AG04450 (cell line): ENCODE measurements at regions of chr2 and their contacts with region 1.

Region 1: GRCh38 chr2:191051825-191052778 is 38.1 kb upstream of the STAT1 start:
- DNase-seq: no peak
- H3K4me3 ChIP-seq: no peak overlapping the region
- H3K27ac ChIP-seq: no peak overlapping the region
- H3K27me3 ChIP-seq: no peaks in the 10 kb centered on the region
- CTCF ChIP-seq: peak; percentile 69

Region 2: GRCh38 chr2:191020221-191020741 is 31.8 kb before region 1 on chr2:
- CTCF ChIA-PET with region 1: interaction called, 4 read pairs
- POLR2A ChIA-PET with region 1: interaction called, 18 read pairs
- DNase-seq: peak; percentile 93
- H3K4me3 ChIP-seq: peak overlapping the region; percentile 85
- H3K27ac ChIP-seq: peak overlapping the region; percentile 99
- H3K27me3 ChIP-seq: no peaks in the 10 kb centered on the region
- CTCF ChIP-seq: no peak

Region 3: DNA sequence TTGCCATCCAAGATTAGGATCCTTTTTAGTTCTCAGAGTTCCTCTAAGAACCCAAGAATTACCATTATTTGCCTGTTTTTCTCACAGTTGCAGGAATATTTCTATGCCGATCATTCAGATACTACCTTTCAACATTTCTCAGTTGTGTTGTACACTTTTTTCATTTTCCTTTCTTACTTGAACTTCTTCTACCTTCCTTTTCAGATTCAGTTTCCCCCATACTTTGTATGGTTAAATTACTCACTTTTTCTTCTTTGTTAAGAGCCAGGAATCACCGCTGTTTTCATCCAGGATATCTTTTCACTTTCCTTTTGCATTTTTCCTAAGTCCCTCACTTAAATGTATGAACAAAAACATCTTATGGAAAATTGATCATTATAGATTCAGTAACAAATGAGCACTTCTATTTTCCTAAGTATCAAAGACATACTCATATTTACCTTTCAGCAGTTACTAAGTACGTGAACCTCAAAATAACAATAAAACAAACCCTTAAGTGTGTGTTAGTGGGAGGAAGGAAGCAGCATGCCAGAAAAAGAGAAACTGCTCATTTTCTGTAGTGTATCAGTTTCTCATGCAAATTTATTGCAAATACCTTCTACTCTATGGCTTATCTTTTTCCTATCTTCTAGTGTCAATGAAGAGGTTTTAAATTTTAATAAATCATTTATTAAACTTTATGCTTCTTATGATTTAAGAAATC is 26.2 kb after region 1 on chr2:
- CTCF ChIA-PET with region 1: interaction called, 11 read pairs
- POLR2A ChIA-PET with region 1: no interaction called
- DNase-seq: no peak
- H3K4me3 ChIP-seq: no peak overlapping the region
- H3K27ac ChIP-seq: no peak overlapping the region
- H3K27me3 ChIP-seq: no peaks in the 10 kb centered on the region
- CTCF ChIP-seq: no peak

Region 4: GRCh38 chr2:191165176-191165643 is 113.1 kb after region 1 on chr2:
- CTCF ChIA-PET with region 1: interaction called, 38 read pairs
- POLR2A ChIA-PET with region 1: interaction called, 3 read pairs
- DNase-seq: no peak
- H3K4me3 ChIP-seq: no peak overlapping the region
- H3K27ac ChIP-seq: no peak overlapping the region
- H3K27me3 ChIP-seq: no peaks in the 10 kb centered on the region
- CTCF ChIP-seq: peak; percentile 81

Region 5: DNA sequence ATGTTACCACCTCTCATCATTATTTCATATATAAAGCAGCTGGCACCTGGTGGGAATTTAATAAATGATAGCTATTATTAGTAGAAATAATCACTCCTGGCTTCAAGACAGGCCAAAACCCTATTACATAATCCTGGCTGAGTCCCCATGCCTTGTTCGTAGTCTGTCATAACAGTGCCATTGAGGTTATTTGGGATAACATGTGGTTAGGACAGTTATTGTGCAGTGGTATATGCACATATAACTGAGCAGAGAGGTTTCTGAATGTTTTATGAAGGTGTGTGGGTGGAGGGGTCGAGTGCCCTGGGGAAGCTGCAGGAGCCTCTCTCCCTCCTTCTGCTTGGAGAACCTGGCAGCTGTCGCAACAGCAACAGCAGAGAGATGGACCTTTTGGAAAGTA is 463.4 kb after region 1 on chr2:
- CTCF ChIA-PET with region 1: interaction called, 13 read pairs
- POLR2A ChIA-PET with region 1: interaction called, 5 read pairs
- DNase-seq: no peak
- H3K4me3 ChIP-seq: no peak overlapping the region
- H3K27ac ChIP-seq: no peak overlapping the region
- H3K27me3 ChIP-seq: no peaks in the 10 kb centered on the region
- CTCF ChIP-seq: no peak